ENCODE measurements at regions of chr18 and their contacts with region 1.

Region 1: GRCh38 chr18:38611036-38611964 is 1045.7 kb upstream of the CELF4 start:
- DNase-seq: peak; percentile 63
- H3K4me3 Mint-ChIP-seq: no peak overlapping the region
- H3K27ac Mint-ChIP-seq: peak overlapping the region; percentile 88
- H3K4me1 Mint-ChIP-seq: peaks cover 42% of the 10 kb centered on the region
- H3K27me3 Mint-ChIP-seq: no peaks in the 10 kb centered on the region

Region 2: DNA sequence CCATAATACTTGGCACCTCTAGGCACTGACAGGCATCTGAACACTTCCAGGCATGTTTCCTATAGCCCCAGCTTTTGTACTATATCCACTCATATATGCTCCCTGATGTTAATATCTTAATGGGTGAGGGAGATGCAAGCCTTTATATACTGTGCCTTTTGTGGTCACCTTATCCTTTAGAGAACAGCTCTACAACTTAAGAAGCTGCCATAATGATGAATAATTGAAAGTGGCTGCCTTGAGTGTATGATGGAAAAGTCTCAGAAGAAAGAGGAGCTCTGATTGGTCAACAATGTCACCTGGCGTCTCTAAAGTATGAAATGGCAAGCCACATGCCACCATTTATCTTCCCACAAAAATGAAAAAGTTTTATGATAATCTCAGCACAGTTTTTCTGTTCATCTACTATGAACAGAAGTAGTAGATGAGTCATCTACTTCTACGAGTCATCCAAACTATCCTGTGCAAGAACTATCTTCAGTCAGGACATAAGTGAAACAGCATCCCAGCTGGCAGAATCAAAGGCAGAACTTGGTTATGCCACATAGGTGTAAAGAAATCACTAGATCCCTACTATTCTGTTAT is 47.8 kb before region 1 on chr18:
- CTCF ChIA-PET with region 1: no interaction called
- intact Hi-C with region 1: loop called (anchors 1 kb)
- DNase-seq: peak; percentile 41
- H3K4me3 Mint-ChIP-seq: no peak overlapping the region
- H3K27ac Mint-ChIP-seq: no peak overlapping the region
- H3K4me1 Mint-ChIP-seq: peaks cover 15% of the 10 kb centered on the region
- H3K27me3 Mint-ChIP-seq: no peaks in the 10 kb centered on the region

Region 3: DNA sequence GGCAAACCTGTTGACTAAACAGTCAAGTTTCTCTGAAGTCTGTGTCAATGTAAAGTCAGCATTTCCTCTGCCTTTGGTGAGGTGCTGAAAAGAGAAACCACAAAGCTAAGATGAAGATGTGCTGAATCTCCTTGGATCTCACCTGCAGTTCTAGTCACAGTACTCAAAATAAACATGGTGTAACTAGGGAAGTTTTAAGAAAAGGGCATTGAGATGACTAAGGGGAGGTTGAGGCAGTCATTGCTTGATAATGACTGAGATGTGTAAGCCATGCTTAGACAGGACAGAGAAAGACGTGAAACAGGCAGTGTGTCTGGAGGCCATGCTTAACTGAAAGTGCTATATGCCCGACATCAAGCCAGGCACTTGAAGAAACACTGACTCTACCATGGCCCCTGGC is 35.7 kb before region 1 on chr18:
- CTCF ChIA-PET with region 1: no interaction called
- intact Hi-C with region 1: loop called (anchors 1 kb)
- DNase-seq: peak; percentile 34
- H3K4me3 Mint-ChIP-seq: no peak overlapping the region
- H3K27ac Mint-ChIP-seq: peak overlapping the region; percentile 77
- H3K4me1 Mint-ChIP-seq: peaks cover 32% of the 10 kb centered on the region
- H3K27me3 Mint-ChIP-seq: no peaks in the 10 kb centered on the region

Region 4: DNA sequence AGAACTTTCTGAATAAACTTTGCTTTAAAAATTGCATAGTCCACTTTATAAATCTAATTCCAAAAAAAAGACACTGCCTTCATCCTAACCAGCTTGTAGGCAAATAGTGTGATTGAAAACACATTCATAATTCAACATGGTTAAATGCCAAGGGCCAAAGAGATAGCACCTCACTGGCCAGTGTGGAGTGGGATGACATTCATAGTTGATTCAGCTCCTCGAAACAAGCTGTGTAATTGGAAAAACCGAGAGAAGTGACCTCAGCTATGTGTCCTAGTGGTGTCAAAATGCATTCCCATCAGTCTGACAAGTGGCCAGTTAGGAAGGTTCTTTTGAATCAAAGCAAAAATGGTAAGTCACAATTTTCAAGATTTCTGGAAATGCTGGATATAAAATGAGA is 22.8 kb after region 1 on chr18:
- CTCF ChIA-PET with region 1: no interaction called
- intact Hi-C with region 1: no loop called
- DNase-seq: no peak
- H3K4me3 Mint-ChIP-seq: no peak overlapping the region
- H3K27ac Mint-ChIP-seq: no peak overlapping the region
- H3K4me1 Mint-ChIP-seq: peaks cover 7% of the 10 kb centered on the region
- H3K27me3 Mint-ChIP-seq: peaks cover 4% of the 10 kb centered on the region

Region 5: DNA sequence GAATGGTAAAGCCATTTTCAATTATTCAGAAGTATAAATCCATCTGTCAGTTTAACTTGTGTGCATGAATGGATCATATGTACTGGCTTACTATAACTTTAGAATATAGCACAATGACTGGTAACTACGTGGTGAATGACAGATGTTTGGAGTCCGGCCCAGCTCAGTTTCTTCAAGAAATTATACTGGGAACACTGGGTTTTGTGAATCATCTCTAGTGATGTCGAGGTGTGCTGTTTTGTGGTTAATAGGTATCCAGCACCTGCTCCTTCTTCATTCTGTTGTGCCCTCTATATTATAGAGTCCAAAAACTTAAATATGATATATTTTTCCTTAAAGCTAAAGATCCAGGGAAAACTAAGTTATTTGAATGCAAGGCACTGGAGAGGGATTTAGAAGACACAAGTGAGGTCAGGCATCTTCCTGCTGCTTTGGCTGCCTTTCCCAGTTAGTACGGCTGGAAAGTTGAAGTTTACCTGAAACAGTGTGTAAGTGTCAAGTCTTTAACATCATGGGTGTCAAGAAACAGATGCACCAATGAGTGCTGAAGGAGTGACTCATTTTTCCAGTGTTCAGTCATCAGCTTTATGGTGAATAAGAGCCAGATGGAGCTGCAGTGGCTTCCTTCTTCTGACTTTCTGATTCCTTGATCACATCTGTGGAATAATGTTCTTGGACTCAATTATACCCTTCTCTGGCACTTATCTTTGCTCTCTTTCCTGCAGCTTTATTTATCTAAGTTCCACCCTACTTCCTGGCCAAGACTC is 33.8 kb after region 1 on chr18:
- CTCF ChIA-PET with region 1: no interaction called
- intact Hi-C with region 1: loop called (anchors 1 kb)
- DNase-seq: peak; percentile 14
- H3K4me3 Mint-ChIP-seq: no peak overlapping the region
- H3K27ac Mint-ChIP-seq: no peak overlapping the region
- H3K4me1 Mint-ChIP-seq: peaks cover 6% of the 10 kb centered on the region
- H3K27me3 Mint-ChIP-seq: peaks cover 2% of the 10 kb centered on the region

Region 6: DNA sequence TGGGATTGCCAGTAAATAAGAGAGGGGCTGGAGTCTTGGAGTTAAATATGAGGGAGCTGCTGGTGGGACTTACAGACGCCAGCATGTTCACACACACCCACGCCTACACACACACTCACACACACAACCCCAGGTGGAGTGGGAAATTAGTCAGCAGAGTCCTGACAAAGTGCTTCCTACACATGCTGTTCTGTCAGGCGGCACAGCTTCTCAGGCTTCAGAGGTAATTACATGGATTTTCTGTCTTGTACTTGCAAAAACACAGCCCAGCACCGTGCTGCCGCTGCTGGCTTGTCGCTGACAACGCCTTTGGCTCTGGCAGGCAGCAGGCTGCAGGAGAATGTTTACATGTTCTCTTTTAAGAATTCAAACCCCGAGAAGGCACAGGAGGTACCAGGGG is 140.6 kb after region 1 on chr18:
- CTCF ChIA-PET with region 1: no interaction called
- intact Hi-C with region 1: loop called (anchors 1 kb)
- DNase-seq: no peak
- H3K4me3 Mint-ChIP-seq: no peak overlapping the region
- H3K27ac Mint-ChIP-seq: no peak overlapping the region
- H3K4me1 Mint-ChIP-seq: peaks cover 11% of the 10 kb centered on the region
- H3K27me3 Mint-ChIP-seq: peaks cover 4% of the 10 kb centered on the region

Region 7: GRCh38 chr18:38940863-38941531 is 329.7 kb after region 1 on chr18:
- CTCF ChIA-PET with region 1: interaction called, 6 read pairs
- intact Hi-C with region 1: loop called (anchors 1 kb)
- DNase-seq: peak; percentile 69
- H3K4me3 Mint-ChIP-seq: peak overlapping the region; percentile 41
- H3K27ac Mint-ChIP-seq: peak overlapping the region; percentile 97
- H3K4me1 Mint-ChIP-seq: peaks cover 38% of the 10 kb centered on the region
- H3K27me3 Mint-ChIP-seq: no peaks in the 10 kb centered on the region

Measured in activated naive CD4-positive, alpha-beta T cell treated with anti-CD3 and anti-CD28 coated beads for 36 hours (primary cell).